Calu3 (cell line): ENCODE measurements at regions of chr17 and their contacts with region 1.

Region 1: DNA sequence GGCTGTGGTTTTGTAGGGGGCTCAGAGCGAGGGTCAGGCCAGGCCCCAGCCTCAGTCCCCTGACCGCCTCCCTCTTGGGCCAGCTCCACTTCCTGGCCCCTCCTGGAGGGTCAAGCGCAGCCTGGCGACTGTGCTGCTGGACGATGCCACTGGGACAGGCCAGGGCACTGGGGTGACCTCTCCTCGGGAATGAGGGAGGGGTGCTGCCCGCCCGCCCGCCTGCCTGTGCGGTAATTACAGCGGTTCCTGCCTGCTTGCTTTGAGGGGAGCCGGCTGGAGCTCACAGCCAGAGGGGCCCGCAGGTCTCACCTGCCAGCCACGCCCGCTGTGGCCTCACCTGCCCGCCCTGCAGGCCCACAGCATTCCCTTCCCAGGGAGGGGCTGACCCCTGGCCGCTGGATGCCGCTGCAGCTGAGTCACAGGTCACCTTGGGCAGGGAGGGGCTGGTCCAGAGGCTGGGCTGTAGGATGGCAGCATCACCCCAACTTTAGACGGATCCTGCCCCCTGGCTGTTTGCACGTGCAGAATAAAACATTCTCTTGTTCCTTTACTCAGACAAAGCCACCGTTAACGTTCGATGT is 76.7 kb upstream of the CBX4 start:
- DNase-seq: peak; percentile 94
- H3K4me3 Mint-ChIP-seq: no peak overlapping the region
- H3K27ac Mint-ChIP-seq: no peak overlapping the region
- H3K4me1 Mint-ChIP-seq: peaks cover 40% of the 10 kb centered on the region
- H3K27me3 Mint-ChIP-seq: no peaks in the 10 kb centered on the region
- CTCF ChIP-seq: peak; percentile 22

Region 2: DNA sequence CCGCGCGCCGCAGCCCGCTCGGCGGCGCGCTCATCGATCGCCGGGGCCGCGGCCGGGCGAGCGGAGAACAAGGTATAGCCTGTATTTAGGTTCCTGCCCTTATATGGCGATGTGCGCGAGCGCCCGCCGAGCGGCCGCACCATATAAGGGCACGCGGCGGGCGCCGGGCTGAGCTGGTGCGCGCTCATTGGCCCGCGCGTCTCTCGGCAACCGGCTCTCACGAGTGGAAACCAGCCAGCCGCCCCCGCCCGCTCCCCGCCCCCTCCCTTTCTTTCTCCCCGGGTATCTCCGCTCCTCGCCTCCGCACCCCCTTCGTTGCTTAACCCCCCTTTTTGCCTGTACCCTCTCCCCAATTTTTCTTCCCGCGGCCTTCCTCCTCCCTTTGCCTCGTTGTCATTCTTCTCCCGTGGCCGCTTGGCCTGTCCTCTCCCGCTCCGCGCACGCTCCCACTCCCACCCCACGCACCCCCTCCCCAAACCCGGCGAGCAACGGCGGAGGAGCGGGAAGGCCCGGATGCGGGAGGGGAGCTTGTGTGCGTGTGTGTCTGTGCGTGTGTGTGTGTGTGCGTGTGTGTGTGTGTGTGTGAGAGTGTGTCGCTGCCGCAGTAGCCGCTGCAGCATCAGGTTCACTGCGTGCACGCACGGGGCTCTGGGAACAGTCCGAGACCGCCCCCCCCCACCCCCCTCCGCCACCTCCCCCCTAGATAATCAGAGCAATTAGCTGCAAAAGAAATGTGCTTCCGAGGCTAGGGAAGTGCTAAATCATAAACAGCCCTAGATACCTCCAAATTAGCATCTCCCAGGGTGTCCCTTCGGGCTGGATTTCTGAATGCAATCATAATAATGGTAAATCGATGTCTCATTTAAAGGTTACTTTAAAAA is 105.6 kb before region 1 on chr17:
- CTCF ChIA-PET with region 1: interaction called, 20 read pairs
- intact Hi-C with region 1: loop called (anchors 1 kb)
- DNase-seq: peak; percentile 88
- H3K4me3 Mint-ChIP-seq: peak overlapping the region; percentile 65
- H3K27ac Mint-ChIP-seq: peak overlapping the region; percentile 48
- H3K4me1 Mint-ChIP-seq: peaks cover 22% of the 10 kb centered on the region
- H3K27me3 Mint-ChIP-seq: peaks cover 52% of the 10 kb centered on the region
- CTCF ChIP-seq: no peak

Region 3: DNA sequence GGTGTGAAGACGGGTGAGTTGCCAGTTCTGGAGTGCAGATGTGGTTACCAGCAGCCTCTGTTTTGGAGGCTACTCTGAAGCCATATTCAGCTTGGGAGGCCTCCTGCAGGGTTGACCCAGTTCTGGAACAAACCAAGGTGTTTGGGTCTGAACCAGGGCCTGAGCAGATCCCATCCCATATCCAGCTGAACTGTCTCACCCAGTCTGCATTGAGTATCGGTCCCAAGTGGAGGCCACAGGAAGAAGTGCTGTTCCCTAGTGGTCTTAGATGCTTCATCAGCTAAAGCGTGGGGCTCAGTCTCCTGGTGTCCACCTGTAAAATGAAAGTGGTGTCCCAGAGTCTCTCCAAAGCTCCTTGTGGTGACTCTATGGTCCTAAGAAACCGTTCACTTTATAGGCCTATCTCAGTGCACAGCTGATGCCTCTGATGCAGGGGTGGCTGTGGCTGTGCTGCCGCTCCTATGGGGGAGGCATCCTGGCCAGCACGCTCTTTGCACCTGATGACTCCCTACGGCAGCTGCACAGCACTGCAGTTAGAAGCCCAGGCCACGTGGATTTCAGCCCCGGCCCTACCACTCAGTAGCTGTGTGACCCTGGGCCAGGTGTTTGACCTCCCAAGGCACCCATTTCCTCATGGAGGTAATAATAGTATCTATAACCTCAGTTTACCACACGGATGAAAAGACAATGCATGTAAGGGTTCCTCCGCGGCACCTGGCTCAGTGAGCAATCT is 97.7 kb before region 1 on chr17:
- CTCF ChIA-PET with region 1: interaction called, 11 read pairs
- intact Hi-C with region 1: no loop called
- DNase-seq: no peak
- H3K4me3 Mint-ChIP-seq: no peak overlapping the region
- H3K27ac Mint-ChIP-seq: no peak overlapping the region
- H3K4me1 Mint-ChIP-seq: no peaks in the 10 kb centered on the region
- H3K27me3 Mint-ChIP-seq: peaks cover 10% of the 10 kb centered on the region
- CTCF ChIP-seq: no peak

Region 4: DNA sequence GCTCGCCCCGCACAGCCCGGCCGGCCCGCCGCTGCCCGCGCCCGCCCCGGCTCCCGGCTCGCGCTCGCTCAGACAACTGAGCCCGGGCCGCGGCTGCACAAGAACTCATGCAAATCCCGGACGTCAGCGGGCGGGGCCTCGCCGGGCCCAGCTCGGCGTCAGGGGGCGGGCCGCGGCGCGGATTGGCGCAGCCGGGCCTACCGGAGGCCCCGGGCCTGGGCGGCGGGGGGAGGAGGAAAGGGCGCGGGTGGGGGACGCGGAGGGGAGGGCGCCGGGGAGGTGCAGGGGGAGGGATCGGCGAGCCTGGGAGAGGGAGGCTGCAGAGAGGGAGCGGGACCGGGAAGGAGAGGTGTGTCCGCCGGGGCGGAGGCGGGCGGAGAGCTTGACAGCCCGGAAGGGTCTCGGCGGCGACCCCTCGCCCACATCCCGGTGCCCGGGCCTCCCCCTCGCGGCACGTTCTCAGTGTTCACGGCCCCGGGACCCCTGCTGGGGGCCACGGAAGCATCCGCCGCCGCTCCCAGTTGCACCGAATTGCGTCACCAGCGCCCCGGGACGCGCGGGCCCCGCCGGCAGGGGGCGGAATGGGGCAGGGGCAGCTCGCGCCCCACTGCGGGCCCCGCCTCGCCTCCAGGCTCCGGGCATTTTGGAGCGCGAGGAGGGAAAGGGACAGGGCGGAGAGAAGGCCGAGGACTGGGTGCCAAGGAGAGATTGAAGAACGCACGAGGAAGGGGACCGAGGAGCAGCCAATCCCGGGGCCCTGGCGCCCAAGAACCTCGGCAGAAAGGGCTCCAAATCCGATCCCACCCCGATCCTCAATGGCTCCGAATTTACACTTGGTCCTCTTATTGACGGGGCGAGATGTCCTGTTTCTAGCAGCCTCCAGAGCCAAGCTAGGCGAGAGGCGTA is 76.3 kb before region 1 on chr17 and contains the start of gene CBX4:
- CTCF ChIA-PET with region 1: interaction called, 19 read pairs
- intact Hi-C with region 1: no loop called
- DNase-seq: peak; percentile 96
- H3K4me3 Mint-ChIP-seq: peak within 1 kb of the TSS; percentile 85
- H3K27ac Mint-ChIP-seq: peak within 1 kb of the TSS; percentile 74
- H3K4me1 Mint-ChIP-seq: peaks cover 15% of the 10 kb centered on the region
- H3K27me3 Mint-ChIP-seq: peaks cover 38% of the 10 kb centered on the region
- CTCF ChIP-seq: peak; percentile 97
- total RNA-seq, gene CBX4: 40.2 and 46.8 TPM in 2 replicates

Region 5: DNA sequence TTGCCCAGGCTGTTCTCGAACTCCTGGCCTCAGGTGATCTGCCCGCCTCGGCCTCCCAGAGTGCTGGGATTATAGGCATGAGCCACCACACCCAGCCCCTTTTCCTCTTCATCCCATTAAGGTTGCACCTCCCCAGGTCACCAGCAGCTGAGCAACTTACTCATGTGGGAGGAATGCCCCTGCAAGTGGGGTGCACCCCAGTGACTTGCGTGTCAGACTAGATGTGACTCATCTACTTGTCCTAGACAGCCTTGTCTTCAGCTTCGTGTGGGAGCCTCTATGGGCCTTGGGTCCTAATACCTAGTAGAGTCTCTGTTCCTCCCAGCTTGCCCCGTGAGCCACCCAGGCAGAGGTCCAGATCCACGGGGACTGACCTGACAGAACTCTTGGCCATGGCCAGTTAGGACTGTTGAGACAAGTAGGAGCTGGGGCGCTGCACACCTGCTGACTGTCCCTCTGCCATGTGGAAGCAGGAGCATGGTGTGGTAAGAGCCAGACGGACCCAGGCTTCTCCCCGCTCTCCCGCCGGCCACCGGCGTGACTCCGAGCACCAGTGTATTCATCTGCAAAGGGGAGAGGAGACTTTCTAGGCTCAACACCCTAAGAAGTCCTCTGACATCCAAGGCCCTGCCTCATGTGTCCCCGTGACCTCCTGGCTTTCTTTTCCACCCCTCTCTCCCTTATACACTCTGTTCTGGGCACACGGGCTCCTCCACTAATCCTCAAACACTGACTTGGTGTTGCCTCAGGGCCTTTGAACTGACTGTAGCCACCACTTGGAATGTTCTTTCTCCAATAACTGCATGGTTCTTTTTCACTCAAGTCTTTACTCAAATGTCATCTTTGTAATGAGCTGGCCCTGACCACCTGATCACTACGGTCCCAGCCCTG is 65.1 kb before region 1 on chr17:
- CTCF ChIA-PET with region 1: interaction called, 7 read pairs
- intact Hi-C with region 1: loop called (anchors 5 kb)
- DNase-seq: peak; percentile 74
- H3K4me3 Mint-ChIP-seq: peak overlapping the region; percentile 4
- H3K27ac Mint-ChIP-seq: peak overlapping the region; percentile 86
- H3K4me1 Mint-ChIP-seq: peaks cover 30% of the 10 kb centered on the region
- H3K27me3 Mint-ChIP-seq: peaks cover 10% of the 10 kb centered on the region
- CTCF ChIP-seq: no peak

Region 6: DNA sequence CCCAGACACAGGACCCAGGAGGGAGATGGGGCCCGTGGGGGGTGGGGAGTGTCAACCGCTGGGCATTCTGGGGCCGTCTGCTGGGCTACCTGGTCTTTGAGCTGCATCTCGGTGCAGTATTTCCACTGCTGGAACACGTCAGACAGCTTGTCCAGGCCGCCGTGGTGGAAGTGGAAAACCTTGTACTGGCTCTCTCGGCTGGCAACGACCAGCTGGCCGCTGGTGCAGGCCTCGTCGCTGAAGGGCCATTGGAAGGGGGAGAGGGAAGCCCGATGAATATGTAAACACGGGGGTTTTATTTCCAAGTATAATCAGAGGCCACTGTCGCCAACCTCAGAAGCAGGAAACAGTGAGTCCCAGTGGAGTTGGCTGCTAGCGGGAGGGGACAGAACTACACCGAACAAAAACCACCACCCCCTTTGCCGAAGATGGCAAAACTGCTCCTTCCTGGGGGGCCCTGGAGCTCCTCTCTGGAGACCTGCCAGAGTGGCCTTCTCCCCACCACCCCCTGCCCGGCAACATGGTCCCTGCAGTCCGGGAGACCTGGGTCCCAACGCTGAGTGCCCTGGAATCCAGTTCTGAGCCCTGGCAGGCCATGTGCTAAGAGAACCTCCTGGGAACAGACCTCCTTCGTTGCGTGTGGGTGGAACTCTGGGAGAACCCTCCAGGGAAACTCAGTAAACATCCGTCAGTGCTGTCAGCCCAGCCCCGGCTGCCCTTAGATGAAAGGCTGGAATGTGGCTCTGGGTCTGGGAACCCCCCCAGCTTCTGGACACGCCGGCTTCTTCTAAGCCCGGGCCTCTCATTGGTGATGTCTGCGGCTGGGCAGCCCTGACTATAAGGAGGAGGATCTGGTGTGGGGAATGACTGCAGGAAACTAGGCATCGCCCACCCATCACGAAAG is 35.7 kb after region 1 on chr17:
- CTCF ChIA-PET with region 1: no interaction called
- intact Hi-C with region 1: no loop called
- DNase-seq: no peak
- H3K4me3 Mint-ChIP-seq: no peak overlapping the region
- H3K27ac Mint-ChIP-seq: no peak overlapping the region
- H3K4me1 Mint-ChIP-seq: no peaks in the 10 kb centered on the region
- H3K27me3 Mint-ChIP-seq: no peaks in the 10 kb centered on the region
- CTCF ChIP-seq: no peak